Right ventricle myocardium inferior (tissue), 1 donor: ENCODE measurements at regions of chr6 and their contacts with region 1.

Region 1: DNA sequence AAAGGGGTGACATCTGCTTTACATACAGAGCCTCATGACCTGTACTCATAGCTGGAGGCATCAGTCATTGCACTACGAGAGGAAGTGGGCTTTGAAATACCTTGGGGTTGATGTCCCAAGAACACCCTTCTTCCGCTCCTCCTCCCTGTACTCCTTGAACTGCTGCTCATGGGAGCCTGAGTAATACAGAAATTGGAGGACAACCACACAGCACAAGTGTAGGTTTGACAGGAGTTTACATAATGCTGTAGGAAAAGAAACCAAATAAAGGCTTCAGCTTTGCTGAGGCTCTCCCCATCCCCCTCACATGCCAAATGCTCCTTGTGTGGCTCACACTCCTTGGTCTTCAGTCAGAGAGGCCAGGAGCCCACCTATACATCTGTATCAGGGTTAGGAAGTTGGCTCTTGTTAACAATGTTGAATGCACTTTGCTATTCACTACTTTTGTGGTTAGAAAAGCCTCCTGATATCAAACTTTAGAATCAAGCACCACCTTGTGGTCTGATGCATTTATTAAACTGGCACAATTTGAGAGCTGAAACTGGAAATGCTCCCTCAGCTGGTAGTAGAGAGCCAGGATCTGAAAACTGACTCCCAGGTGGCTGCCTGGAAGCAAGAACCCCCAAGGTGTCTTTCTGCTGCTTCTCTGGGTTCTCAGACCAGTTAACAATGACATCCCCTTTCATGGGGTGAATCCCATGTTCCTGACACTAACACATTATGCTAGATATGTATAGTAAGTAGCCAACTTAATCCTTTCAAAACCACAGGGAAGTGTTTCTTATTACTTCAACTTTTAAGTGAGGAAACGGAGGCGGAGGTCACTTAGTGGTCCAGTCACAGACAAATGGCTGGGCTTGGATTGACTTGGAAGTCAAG is 56.2 kb upstream of the EDN1 start:
- DNase-seq: no peak
- ATAC-seq: peak; percentile 76

Region 2: GRCh38 chr6:11824986-11825385 is 408.9 kb before region 1 on chr6:
- intact Hi-C with region 1: loop called (anchors 5 kb)
- DNase-seq: no peak
- ATAC-seq: no peak

Region 3: DNA sequence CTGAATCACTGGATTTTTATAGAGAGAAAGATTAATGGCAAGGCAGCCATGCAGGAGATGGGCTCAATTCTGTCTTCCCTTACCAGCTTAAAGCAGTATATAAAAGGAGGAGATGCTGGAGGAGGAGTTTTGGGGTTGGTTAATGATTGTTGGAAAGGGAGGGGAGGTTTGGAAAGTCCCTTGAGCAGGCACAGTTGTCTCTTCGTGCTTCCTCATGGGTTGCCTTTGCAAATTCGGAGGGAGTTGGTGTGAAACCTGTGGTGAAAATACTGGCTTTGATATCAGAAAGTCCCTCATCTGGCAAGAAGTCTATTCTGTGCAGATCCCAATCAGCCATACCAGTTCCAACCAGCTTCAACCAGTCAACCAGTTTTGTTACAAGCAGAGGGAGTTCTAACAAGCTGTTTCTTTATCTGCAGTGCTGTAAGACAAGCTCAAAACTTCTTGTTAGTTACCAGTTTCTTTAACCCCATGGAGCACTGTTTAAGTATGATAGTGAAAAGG is 114.8 kb before region 1 on chr6:
- intact Hi-C with region 1: no loop called
- DNase-seq: no peak
- ATAC-seq: no peak

Region 4: DNA sequence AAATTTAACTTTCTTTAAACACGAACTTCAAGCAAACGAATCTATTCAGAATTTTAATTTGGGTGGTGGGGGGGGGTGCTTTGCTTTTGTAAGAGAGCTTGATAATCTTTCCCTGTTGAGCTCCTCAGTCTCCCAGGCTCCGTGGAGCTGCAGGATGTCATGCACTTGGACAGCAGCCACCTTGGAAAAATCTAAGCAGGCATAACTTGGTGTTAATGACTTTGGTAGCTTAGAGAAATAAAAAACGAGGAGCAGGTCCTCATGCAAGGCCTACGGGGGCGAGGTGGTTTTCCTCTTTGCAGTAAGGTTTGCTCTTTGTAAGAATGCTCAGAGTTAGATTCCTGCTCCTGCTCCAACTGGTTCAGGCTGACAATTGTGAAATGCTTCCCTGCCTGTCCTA is 158.6 kb after region 1 on chr6:
- intact Hi-C with region 1: no loop called
- DNase-seq: no peak
- ATAC-seq: no peak

Region 5: GRCh38 chr6:12528581-12529363 is 294.8 kb after region 1 on chr6:
- intact Hi-C with region 1: no loop called
- DNase-seq: no peak
- ATAC-seq: no peak